Panc1 (cell line): ENCODE measurements at regions of chr14 and their contacts with region 1.

Region 1: GRCh38 chr14:60114881-60115280 is 23.2 kb downstream of the PCNX4 start:
- DNase-seq: no peak
- ATAC-seq: no peak
- H3K4me3 ChIP-seq: no peak overlapping the region
- H3K27ac ChIP-seq: no peak overlapping the region
- H3K4me1 ChIP-seq: no peaks in the 10 kb centered on the region
- H3K27me3 ChIP-seq: no peaks in the 10 kb centered on the region
- CTCF ChIP-seq: no peak

Region 2: DNA sequence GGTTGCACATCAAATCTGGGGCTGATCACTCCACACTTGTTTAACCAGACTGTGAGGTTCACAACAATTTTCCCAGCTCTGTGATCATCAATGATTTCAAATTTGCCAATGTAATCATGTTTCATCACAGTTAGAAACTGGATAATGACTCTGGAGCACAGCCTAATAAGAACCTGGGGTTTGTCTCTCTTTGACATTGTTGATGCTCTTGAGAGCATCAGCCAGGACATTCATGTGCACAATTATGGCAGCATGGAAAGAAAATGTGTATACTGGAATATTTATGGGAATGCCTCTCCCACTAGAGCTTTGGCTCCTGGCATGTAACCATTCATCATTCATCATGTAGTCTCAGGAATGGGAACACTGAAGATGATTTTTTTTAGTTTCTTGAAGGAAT is 487.4 kb after region 1 on chr14:
- CTCF ChIA-PET with region 1: no interaction called
- POLR2A ChIA-PET with region 1: interaction called, 13 read pairs
- in situ Hi-C with region 1: no loop called
- intact Hi-C with region 1: no loop called
- DNase-seq: no peak
- ATAC-seq: no peak
- H3K4me3 ChIP-seq: no peak overlapping the region
- H3K27ac ChIP-seq: no peak overlapping the region
- H3K4me1 ChIP-seq: no peaks in the 10 kb centered on the region
- H3K27me3 ChIP-seq: no peaks in the 10 kb centered on the region
- CTCF ChIP-seq: no peak